Activated naive CD4-positive, alpha-beta T cell treated with anti-CD3 and anti-CD28 coated beads for 36 hours (primary cell): ENCODE measurements at regions of chr1 and their contacts with region 1.

Region 1: DNA sequence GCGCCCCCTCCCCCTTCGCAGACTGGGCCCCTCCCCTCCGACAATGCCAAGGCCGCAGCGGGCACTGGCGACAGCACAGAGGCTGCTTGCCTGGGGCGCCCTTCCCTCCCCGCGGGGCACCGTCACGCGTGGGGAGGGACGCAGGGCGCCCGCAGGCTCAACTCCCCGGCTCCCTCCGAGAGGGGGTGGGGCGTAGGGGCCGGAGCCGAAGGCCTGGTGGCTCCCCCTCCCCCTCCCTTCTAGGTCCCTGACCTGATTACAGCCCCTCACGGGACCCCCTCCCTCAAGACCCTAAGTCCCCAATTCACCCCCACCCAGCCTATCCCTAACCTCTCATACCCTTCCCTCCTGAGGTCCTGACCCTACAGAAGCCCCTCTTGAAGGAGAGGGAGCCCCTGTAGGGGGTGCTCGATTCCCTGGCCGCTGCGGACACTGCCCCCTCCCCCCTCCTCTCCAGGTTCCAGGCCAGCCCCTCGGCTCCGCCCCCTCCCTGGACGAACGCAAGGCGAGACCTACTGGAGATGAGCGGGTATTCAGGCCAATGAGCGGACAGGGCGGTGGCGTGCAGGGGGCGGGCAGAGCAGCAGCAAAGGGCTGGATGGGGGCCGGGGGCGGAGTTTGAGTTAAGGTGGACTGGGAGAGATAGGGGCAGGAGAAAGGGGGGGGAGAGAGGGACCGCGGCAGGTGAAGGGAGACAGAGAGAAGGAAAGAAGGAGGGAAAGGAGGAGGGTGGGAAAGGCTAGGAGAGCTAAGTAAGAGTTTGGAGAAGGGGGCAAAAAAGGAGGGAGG is 733 bp upstream of the ZBTB7B start:
- DNase-seq: peak; percentile 100
- H3K4me3 Mint-ChIP-seq: peak overlapping the region; percentile 91
- H3K27ac Mint-ChIP-seq: peak overlapping the region; percentile 94
- H3K4me1 Mint-ChIP-seq: peaks cover 50% of the 10 kb centered on the region
- H3K27me3 Mint-ChIP-seq: no peaks in the 10 kb centered on the region

Region 2: GRCh38 chr1:153967082-153968000 is 1034.5 kb before region 1 on chr1 and contains the start of gene CREB3L4:
- CTCF ChIA-PET with region 1: no interaction called
- intact Hi-C with region 1: loop called (anchors 10 kb)
- DNase-seq: peak; percentile 90
- H3K4me3 Mint-ChIP-seq: peak within 1 kb of the TSS; percentile 85
- H3K27ac Mint-ChIP-seq: peak within 1 kb of the TSS; percentile 94
- H3K4me1 Mint-ChIP-seq: peaks cover 42% of the 10 kb centered on the region
- H3K27me3 Mint-ChIP-seq: no peaks in the 10 kb centered on the region
- total RNA-seq, gene CREB3L4: 5.6 to 7.4 TPM

Region 3: GRCh38 chr1:154558575-154559465 is 443.0 kb before region 1 on chr1 and contains the start of gene UBE2Q1:
- CTCF ChIA-PET with region 1: no interaction called
- intact Hi-C with region 1: loop called (anchors 1 kb)
- DNase-seq: peak; percentile 99
- H3K4me3 Mint-ChIP-seq: peak within 1 kb of the TSS; percentile 91
- H3K27ac Mint-ChIP-seq: peak within 1 kb of the TSS; percentile 92
- H3K4me1 Mint-ChIP-seq: peaks cover 28% of the 10 kb centered on the region
- H3K27me3 Mint-ChIP-seq: no peaks in the 10 kb centered on the region
- total RNA-seq, gene UBE2Q1: 79.2 to 84.6 TPM

Region 4: DNA sequence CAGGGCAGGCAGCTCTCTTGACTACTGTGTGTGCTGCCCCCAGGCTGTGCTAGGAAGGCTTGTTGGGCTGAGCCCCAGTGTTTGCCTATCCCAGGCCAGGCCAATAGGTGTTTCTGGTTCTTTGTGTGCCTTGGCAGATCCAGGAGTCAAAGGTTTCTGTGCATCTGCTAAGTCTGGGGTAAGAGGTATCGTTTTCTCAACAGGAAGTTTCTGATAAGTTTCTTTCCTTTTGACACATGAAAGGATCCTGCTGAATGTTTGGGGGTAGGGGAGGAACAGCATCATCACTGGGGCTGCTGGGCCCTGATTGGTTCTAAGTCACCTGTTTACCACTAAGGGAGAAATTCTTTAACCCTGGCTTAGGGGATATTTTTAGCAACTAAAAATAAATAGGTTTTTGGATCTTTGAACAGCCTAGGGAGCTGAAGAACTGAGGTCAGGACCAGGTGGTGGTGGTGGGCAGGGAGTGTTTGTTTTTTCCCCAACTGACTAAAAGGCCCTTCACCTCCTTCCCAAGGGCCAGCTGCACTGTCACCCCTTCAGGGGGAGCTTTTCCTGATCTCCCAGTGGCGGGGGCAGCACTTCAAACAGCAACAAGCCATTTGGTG is 216.8 kb before region 1 on chr1:
- CTCF ChIA-PET with region 1: no interaction called
- intact Hi-C with region 1: loop called (anchors 2 kb)
- DNase-seq: peak; percentile 85
- H3K4me3 Mint-ChIP-seq: peak overlapping the region; percentile 54
- H3K27ac Mint-ChIP-seq: peak overlapping the region; percentile 98
- H3K4me1 Mint-ChIP-seq: peaks cover 38% of the 10 kb centered on the region
- H3K27me3 Mint-ChIP-seq: no peaks in the 10 kb centered on the region

Region 5: GRCh38 chr1:154974063-154974807 is 27.6 kb before region 1 on chr1 and contains the start of gene CKS1B:
- CTCF ChIA-PET with region 1: interaction called, 5 read pairs
- intact Hi-C with region 1: loop called (anchors 1 kb)
- DNase-seq: peak; percentile 99
- H3K4me3 Mint-ChIP-seq: no peak within 1 kb of the TSS
- H3K27ac Mint-ChIP-seq: no peak within 1 kb of the TSS
- H3K4me1 Mint-ChIP-seq: peaks cover 32% of the 10 kb centered on the region
- H3K27me3 Mint-ChIP-seq: no peaks in the 10 kb centered on the region
- total RNA-seq, gene CKS1B: 283 to 291 TPM

Region 6: DNA sequence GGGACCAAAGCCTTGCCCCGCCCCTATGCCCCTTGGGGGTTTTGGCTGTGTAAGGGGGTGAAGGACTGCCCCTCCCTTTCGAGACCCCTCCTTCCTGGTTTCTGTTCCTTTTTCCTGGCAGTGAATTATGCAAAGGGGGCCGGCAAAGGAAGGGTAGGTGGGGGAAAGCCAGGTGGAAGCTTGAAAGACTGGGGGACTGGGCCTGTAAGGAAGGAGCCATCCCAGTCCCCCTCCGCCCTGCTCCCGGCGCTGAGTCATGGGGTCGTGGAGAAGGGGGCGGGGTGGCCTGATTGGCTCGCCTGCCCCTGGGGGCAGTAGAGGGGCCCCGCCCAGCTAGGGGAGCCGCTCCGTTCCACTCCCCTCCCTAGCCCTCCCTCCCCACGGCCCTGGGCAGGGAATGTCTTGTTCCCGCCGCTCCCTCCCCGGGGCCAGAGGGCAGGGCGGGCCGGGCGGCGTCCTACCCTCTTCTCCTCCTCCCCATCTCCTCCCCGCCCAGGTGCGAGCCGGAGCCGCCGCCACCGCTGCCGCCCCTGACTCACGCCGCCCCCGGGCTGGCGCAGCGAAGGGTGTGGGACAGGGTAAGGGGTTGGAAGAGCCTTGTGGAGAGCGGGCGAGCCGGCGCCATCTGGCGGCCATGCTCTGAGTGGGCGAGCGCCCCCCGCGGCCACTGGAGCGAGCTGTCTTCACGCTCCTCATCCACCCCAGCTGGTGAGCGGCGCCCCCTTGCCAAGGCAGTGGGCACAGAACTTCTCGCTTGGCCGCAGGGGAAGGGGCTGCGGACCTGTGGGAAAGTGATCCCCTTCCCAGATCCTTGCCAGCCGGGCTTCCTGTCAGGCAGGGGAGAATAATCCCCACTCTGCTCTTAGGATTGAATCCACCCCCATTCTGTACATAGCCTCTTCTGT is 15.4 kb after region 1 on chr1:
- CTCF ChIA-PET with region 1: interaction called, 37 read pairs
- intact Hi-C with region 1: loop called (anchors 1 kb)
- DNase-seq: peak; percentile 94
- H3K4me3 Mint-ChIP-seq: peak overlapping the region; percentile 56
- H3K27ac Mint-ChIP-seq: peak overlapping the region; percentile 85
- H3K4me1 Mint-ChIP-seq: peaks cover 65% of the 10 kb centered on the region
- H3K27me3 Mint-ChIP-seq: no peaks in the 10 kb centered on the region

Region 7: DNA sequence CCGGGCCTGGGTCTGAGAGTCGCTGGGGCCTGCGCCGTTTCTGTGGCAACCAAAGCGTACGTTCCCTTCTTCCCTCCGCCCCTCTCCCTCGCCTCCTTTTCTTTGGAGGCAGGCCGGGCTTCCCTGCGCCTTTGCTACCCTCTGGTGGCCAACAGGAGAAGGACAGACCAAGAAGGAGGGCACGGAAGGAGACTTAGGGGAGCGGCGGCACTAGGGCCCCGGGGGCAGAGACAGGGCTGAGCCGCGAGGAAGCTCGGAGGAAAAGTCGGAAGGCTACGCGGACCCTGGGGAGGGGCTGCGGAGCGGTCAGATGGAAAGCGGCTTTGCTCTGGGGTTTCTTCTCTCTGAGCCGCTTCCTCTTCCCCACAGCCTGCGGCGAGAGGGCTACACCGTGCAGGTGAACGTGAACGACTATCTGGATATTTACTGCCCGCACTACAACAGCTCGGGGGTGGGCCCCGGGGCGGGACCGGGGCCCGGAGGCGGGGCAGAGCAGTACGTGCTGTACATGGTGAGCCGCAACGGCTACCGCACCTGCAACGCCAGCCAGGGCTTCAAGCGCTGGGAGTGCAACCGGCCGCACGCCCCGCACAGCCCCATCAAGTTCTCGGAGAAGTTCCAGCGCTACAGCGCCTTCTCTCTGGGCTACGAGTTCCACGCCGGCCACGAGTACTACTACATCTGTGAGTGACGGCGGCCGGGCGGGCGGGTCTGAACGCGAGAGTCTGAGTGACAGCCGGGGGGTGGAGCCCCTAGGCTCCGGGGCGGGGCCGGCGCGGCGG is 83.0 kb after region 1 on chr1:
- CTCF ChIA-PET with region 1: interaction called, 5 read pairs
- intact Hi-C with region 1: loop called (anchors 1 kb)
- DNase-seq: peak; percentile 94
- H3K4me3 Mint-ChIP-seq: peak overlapping the region; percentile 95
- H3K27ac Mint-ChIP-seq: peak overlapping the region; percentile 88
- H3K4me1 Mint-ChIP-seq: peaks cover 34% of the 10 kb centered on the region
- H3K27me3 Mint-ChIP-seq: peaks cover 33% of the 10 kb centered on the region